Heart left ventricle (tissue), 16 donors: ENCODE measurements at regions of chr9 and their contacts with region 1.

Region 1: GRCh38 chr9:72952914-72953313 is at the start of gene ALDH1A1:
- DNase-seq: no peak
- ATAC-seq: peak in 3 of 4 donors; percentile 42 to 62 (median 62)
- H3K4me3 ChIP-seq: peak within 1 kb of the TSS in 10 of 12 donors; percentile 18 to 62 (median 48)
- H3K27ac ChIP-seq: peak within 1 kb of the TSS; percentile 4 to 81 (median 52)
- H3K4me1 ChIP-seq: peaks cover 0 to 30% (median 0%) of the 10 kb centered on the region in 12 donors
- H3K27me3 ChIP-seq: no peaks in the 10 kb centered on the region
- CTCF ChIP-seq: no peak
- POLR2A ChIP-seq: peak in 1 of 2 donors; percentile 34
- total RNA-seq, gene ALDH1A1: 5.3 to 37.5 (median 12.6) TPM

Region 2: GRCh38 chr9:72864327-72864726 is 88.6 kb before region 1 on chr9:
- intact Hi-C with region 1: loop called in 1 of 10 experiments (anchors 10 kb)
- DNase-seq: no peak
- ATAC-seq: no peak
- H3K4me3 ChIP-seq: no peak overlapping the region
- H3K27ac ChIP-seq: no peak overlapping the region
- H3K4me1 ChIP-seq: peaks cover 0 to 4% (median 0%) of the 10 kb centered on the region in 12 donors
- H3K27me3 ChIP-seq: no peaks in the 10 kb centered on the region
- CTCF ChIP-seq: no peak
- POLR2A ChIP-seq: no peak

Region 3: DNA sequence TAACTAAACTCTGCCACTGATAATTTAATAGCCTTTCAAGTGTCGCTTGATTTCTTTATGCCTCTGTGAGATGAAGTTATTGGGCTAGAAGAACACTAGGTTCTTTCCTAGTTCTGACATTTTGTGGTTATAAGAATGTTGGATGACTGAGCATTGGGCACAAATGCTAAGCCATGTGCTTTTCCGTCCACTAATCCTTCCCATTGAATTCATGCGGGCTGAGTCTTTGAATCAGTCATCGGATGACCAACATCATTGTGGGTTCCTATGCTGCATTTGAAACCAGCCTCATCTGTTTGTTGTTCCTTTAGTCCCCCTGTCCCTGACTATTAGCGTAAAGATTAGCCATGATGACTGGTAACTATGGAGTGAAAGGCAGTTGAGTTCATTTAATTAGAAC is 58.6 kb before region 1 on chr9:
- intact Hi-C with region 1: loop called in 1 of 10 experiments (anchors 10 kb)
- DNase-seq: no peak
- ATAC-seq: no peak
- H3K4me3 ChIP-seq: no peak overlapping the region
- H3K27ac ChIP-seq: no peak overlapping the region
- H3K4me1 ChIP-seq: no peaks in the 10 kb centered on the region
- H3K27me3 ChIP-seq: no peaks in the 10 kb centered on the region
- CTCF ChIP-seq: no peak
- POLR2A ChIP-seq: no peak

Region 4: GRCh38 chr9:72917892-72918509 is 34.9 kb before region 1 on chr9:
- intact Hi-C with region 1: loop called in 1 of 10 experiments (anchors 5 kb)
- DNase-seq: no peak
- ATAC-seq: no peak
- H3K4me3 ChIP-seq: no peak overlapping the region
- H3K27ac ChIP-seq: no peak overlapping the region
- H3K4me1 ChIP-seq: no peaks in the 10 kb centered on the region
- H3K27me3 ChIP-seq: no peaks in the 10 kb centered on the region
- CTCF ChIP-seq: no peak
- POLR2A ChIP-seq: no peak

Region 5: GRCh38 chr9:73009649-73010288 is 56.9 kb after region 1 on chr9:
- intact Hi-C with region 1: loop called in 1 of 10 experiments (anchors 10 kb)
- DNase-seq: no peak
- ATAC-seq: no peak
- H3K4me3 ChIP-seq: no peak overlapping the region
- H3K27ac ChIP-seq: no peak overlapping the region
- H3K4me1 ChIP-seq: peaks cover 0 to 13% (median 0%) of the 10 kb centered on the region in 12 donors
- H3K27me3 ChIP-seq: peaks cover 0 to 3% (median 0%) of the 10 kb centered on the region in 9 donors
- CTCF ChIP-seq: no peak
- POLR2A ChIP-seq: no peak